ENCODE measurements at regions of chr3 and their contacts with region 1.

Region 1: GRCh38 chr3:149393345-149394160 is 16.1 kb upstream of the TM4SF1 start:
- DNase-seq: peak; percentile 86 to 90 (median 87)
- ATAC-seq: peak; percentile 90
- H3K4me3 ChIP-seq: no peak overlapping the region
- H3K27ac ChIP-seq: peak overlapping the region in 2 of 4 donors; percentile 15 to 18
- H3K4me1 ChIP-seq: peaks cover 65% of the 10 kb centered on the region
- H3K27me3 ChIP-seq: no peaks in the 10 kb centered on the region
- CTCF ChIP-seq: peak; percentile 66 to 97 (median 93)
- POLR2A ChIP-seq: no peak

Region 2: DNA sequence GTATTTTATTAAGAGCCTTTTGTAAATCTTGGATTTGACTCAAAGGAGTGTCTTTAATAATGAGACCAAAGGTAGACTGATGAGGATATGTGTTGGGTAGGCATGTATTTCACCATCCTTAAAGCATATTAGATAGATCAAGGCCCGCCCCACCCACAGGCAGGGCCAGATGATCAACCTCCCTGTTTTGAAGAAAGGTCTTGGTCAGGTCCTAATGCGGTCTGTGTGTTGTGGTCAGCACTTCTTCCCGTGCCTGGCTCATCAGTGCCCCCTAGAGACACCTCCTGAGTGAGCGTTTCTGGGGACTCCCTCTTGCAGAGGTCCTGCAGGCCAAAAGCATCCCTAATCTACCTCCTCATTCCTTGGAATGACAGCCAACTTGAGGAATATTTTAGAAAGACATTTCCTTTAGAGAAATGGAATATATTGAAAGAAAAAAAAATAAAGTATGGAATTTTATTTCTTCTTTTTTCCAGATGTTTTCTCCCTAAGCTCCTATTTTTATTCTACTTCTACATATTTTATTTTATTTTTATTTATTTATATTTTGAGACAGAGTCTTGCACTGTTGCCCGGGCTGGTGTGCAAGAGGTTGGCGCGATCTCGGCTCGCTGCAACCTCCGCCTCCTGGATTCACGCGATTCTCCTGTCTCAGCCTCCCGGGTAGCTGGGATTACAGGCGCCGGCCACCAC is 86.9 kb after region 1 on chr3:
- intact Hi-C with region 1: loop called (anchors 10 kb)
- DNase-seq: peak; percentile 88 to 91 (median 89)
- ATAC-seq: peak; percentile 98
- H3K4me3 ChIP-seq: no peak overlapping the region
- H3K27ac ChIP-seq: peak overlapping the region; percentile 35 to 68 (median 58)
- H3K4me1 ChIP-seq: peaks cover 26% of the 10 kb centered on the region
- H3K27me3 ChIP-seq: no peaks in the 10 kb centered on the region
- CTCF ChIP-seq: peak; percentile 64 to 93 (median 89)
- POLR2A ChIP-seq: no peak

Region 3: DNA sequence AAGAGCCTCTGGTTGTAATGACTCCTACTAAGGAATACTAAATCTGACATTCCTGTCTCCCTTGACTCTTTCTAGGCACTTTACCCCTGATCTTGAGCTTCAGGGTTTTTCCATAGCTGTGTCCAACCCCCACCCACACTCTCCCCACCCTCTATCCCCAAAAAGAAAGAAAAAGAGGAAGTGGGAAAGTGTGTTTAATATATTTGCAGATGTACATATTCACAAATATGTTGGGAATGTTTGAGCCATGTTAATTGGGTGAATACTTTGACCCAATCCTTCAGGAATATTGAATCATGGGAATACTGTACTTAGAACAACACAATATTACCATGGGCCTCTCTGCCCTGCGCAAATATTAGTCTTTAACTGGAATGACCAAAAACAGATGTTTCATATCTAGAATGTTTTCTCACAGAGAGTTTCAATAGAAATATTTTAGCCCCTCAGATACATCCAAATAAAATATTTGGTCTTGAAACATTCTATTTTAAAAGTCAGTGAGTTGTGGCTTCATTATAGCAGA is 596.9 kb after region 1 on chr3:
- intact Hi-C with region 1: no loop called
- DNase-seq: no peak
- ATAC-seq: no peak
- H3K4me3 ChIP-seq: no peak overlapping the region
- H3K27ac ChIP-seq: no peak overlapping the region
- H3K4me1 ChIP-seq: no peaks in the 10 kb centered on the region
- H3K27me3 ChIP-seq: no peaks in the 10 kb centered on the region
- CTCF ChIP-seq: no peak
- POLR2A ChIP-seq: no peak

Measured in body of pancreas (tissue), 4 donors.